Activated CD8-positive, alpha-beta T cell treated with anti-CD3 and anti-CD28 coated beads for 36 hours (primary cell): ENCODE measurements at regions of chr10 and their contacts with region 1.

Region 1: DNA sequence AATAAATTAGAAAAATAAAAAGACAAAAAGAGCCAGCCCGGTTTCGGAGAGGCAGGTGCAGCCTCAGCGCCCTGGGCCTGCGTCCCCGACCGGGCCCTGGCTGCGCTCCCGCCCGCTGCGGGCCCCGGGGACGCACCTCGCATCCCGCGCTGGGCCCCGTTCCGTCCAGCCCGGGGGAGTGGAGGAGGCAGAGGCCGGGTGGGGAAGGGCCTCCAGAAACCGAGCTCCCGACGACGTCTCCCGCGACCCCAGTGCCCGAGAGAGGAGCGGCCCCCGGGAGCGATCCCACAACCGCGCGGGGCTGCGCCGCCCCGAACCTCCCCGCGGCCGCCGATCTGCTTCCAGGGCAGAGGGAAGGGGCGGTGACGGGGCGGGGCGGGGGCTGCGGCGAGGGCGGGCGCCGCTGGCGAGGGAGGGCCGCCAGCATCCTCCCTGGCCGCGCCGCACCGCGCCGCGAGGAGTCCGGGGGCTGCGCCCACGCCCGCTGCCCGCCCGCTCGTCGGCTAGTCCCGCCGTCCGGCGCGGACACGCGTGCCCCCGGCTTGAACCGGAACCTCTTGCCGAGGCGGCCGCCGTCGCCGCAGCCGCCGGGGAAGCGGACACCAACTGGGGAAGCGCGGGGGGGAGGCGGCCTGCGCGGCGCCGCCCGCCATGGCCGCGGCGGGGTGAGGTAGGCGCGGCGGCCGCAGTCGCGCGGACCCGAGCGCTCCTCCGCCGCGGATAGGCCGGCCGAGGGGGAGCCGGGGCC is at the start of gene CCNY:
- DNase-seq: peak; percentile 78
- ATAC-seq: peak; percentile 67
- H3K4me3 Mint-ChIP-seq: peak within 1 kb of the TSS; percentile 92
- H3K27ac Mint-ChIP-seq: peak within 1 kb of the TSS; percentile 90
- H3K4me1 Mint-ChIP-seq: peaks cover 59% of the 10 kb centered on the region
- H3K27me3 Mint-ChIP-seq: no peaks in the 10 kb centered on the region
- CTCF ChIP-seq: no peak
- total RNA-seq, gene CCNY: 42.2 to 48.8 TPM

Region 2: DNA sequence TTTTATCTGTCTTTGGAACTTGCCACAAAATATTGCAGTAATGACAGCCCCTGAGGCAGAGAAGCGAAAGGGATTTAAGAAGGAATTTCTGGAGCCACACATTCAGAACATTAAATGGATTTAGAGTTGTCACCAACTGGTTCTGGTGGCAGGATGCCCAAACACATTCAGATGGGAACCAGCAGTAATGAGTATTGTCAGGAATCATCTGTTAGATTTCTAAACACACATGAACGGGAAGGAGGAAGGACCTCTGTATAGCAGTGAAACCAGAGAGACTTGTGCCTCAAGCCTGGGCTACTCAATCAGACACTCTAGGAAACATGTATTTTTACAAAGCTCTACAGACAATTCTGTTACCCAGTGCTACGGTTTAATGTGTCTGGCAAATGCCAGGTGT is 103.7 kb before region 1 on chr10:
- CTCF ChIA-PET with region 1: no interaction called
- POLR2A ChIA-PET with region 1: no interaction called
- intact Hi-C with region 1: no loop called
- DNase-seq: no peak
- ATAC-seq: no peak
- H3K4me3 Mint-ChIP-seq: no peak overlapping the region
- H3K27ac Mint-ChIP-seq: no peak overlapping the region
- H3K4me1 Mint-ChIP-seq: no peaks in the 10 kb centered on the region
- H3K27me3 Mint-ChIP-seq: no peaks in the 10 kb centered on the region
- CTCF ChIP-seq: no peak

Region 3: GRCh38 chr10:35306852-35307256 is 29.4 kb before region 1 on chr10:
- CTCF ChIA-PET with region 1: no interaction called
- POLR2A ChIA-PET with region 1: no interaction called
- intact Hi-C with region 1: no loop called
- DNase-seq: peak; percentile 8
- ATAC-seq: no peak
- H3K4me3 Mint-ChIP-seq: no peak overlapping the region
- H3K27ac Mint-ChIP-seq: no peak overlapping the region
- H3K4me1 Mint-ChIP-seq: no peaks in the 10 kb centered on the region
- H3K27me3 Mint-ChIP-seq: peaks cover 27% of the 10 kb centered on the region
- CTCF ChIP-seq: no peak

Region 4: GRCh38 chr10:35355971-35356724 is 19.9 kb after region 1 on chr10:
- CTCF ChIA-PET with region 1: interaction called, 9 read pairs
- POLR2A ChIA-PET with region 1: interaction called, 7 read pairs
- intact Hi-C with region 1: loop called (anchors 2 kb)
- DNase-seq: peak; percentile 65
- ATAC-seq: peak; percentile 84
- H3K4me3 Mint-ChIP-seq: peak overlapping the region; percentile 51
- H3K27ac Mint-ChIP-seq: peak overlapping the region; percentile 89
- H3K4me1 Mint-ChIP-seq: peaks cover 70% of the 10 kb centered on the region
- H3K27me3 Mint-ChIP-seq: no peaks in the 10 kb centered on the region
- CTCF ChIP-seq: no peak

Region 5: GRCh38 chr10:35379226-35380137 is 43.2 kb after region 1 on chr10:
- CTCF ChIA-PET with region 1: no interaction called
- POLR2A ChIA-PET with region 1: interaction called, 3 read pairs
- intact Hi-C with region 1: loop called (anchors 5 kb)
- DNase-seq: peak; percentile 48
- ATAC-seq: peak; percentile 50
- H3K4me3 Mint-ChIP-seq: peak overlapping the region; percentile 30
- H3K27ac Mint-ChIP-seq: peak overlapping the region; percentile 84
- H3K4me1 Mint-ChIP-seq: peaks cover 65% of the 10 kb centered on the region
- H3K27me3 Mint-ChIP-seq: no peaks in the 10 kb centered on the region
- CTCF ChIP-seq: no peak

Region 6: GRCh38 chr10:35442028-35442427 is 105.8 kb after region 1 on chr10:
- CTCF ChIA-PET with region 1: no interaction called
- POLR2A ChIA-PET with region 1: no interaction called
- intact Hi-C with region 1: loop called (anchors 2 kb)
- DNase-seq: peak; percentile 49
- ATAC-seq: peak; percentile 74
- H3K4me3 Mint-ChIP-seq: no peak overlapping the region
- H3K27ac Mint-ChIP-seq: peak overlapping the region; percentile 77
- H3K4me1 Mint-ChIP-seq: peaks cover 46% of the 10 kb centered on the region
- H3K27me3 Mint-ChIP-seq: no peaks in the 10 kb centered on the region
- CTCF ChIP-seq: no peak